ENCODE measurements at regions of chr5 and their contacts with region 1.

Region 1: DNA sequence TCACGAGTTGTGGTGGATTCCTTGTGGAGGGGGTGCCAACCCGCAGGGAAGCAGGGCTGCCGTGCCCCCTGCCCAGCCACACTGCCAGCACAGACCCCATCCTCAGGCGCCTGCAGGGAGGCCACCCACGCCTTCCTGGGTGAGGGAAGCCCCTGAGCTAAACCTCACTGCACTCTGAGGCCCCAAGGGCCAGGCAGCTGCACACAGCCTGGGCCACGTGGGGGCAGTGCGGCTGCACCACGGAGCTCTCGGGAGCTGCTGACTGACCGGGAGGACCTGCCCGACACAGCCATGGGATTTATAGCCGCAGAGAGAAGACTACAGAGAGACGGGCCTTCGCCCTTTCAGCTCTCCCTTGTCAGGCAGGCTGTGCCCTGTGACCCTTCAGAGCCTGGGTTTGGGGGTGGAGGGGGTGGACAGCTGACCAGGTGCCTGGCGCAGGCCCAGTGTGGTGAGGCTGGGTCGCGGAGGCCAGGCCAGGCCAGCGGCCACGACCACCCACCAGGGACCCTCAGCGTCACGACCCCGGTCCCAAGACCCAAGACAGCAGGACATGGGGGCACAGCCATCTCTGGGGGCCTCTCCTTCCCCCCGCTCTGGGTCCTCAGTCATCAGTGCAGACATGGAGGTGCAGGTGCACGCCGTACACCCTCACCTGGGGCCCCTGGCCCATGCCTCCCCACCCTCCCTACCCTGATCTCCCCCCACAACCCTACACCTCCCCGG is 4.3 kb upstream of the AHRR start:
- DNase-seq: no peak
- H3K4me3 ChIP-seq: no peak overlapping the region
- H3K27ac ChIP-seq: no peak overlapping the region
- H3K4me1 ChIP-seq: peaks cover 5% of the 10 kb centered on the region
- H3K27me3 ChIP-seq: no peaks in the 10 kb centered on the region
- CTCF ChIP-seq: no peak
- EP300 ChIP-seq: no peak
- POLR2A ChIP-seq: no peak

Region 2: DNA sequence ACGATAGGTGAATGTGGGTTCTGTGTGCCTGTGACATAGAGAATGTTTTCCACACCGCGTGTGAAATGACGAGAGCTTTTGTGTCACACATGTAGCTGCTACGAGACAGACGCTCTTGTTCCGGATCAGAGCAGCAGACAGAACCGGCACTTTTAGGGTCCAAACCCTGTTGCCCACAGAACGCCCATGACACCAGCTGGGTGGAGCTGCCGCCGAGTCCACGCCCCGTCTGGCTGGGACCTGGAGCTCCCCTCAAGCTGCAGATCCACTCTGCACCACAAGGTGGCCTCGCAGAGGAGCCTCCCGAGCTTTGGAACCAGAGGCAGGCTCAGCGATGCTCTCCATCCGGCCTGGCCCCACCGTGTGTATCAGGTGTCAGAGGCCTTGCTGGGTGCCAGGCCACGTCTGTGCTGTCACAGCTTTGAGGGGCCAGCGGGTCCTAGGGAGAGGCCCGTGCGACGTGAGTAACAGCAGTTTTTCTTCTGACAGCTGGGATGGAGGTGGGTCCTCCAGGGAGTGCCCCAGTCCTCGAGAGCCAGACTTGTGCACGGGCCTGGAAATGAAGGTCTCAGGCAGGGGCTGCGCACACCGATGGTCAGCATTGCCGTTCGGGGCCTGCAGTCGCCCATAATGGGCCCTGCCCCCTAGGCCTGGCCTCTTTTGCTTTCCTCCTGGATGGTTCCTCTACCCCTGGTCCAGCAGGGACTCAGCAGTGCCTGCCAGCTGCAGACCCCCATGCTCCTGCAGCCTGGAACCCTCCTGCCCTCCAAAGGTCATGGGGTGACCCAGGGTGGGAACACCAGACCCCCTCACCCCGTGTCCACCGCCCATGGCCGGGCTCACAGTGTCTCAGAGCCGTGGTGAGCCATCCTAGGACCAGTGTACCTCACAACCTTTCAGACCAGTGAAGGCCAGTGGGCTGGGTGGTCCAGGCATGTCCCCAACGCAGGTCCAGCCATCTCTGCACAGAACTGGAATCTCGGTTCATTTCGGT is 128.5 kb before region 1 on chr5:
- intact Hi-C with region 1: loop called in 1 of 4 experiments (anchors 5 kb)
- DNase-seq: peak; percentile 86 to 94 (median 92)
- H3K4me3 ChIP-seq: no peak overlapping the region
- H3K27ac ChIP-seq: no peak overlapping the region
- H3K4me1 ChIP-seq: peaks cover 7% of the 10 kb centered on the region
- H3K27me3 ChIP-seq: no peaks in the 10 kb centered on the region
- CTCF ChIP-seq: peak; percentile 88 to 96 (median 93)
- EP300 ChIP-seq: no peak
- POLR2A ChIP-seq: no peak

Region 3: GRCh38 chr5:442335-443238 is 125.3 kb after region 1 on chr5 and contains the start of gene EXOC3:
- intact Hi-C with region 1: loop called in 1 of 4 experiments (anchors 10 kb)
- DNase-seq: peak; percentile 65 to 84 (median 78)
- H3K4me3 ChIP-seq: peak within 1 kb of the TSS; percentile 63
- H3K27ac ChIP-seq: peak within 1 kb of the TSS in 1 of 2 donors; percentile 63
- H3K4me1 ChIP-seq: peaks cover 14% of the 10 kb centered on the region
- H3K27me3 ChIP-seq: no peaks in the 10 kb centered on the region
- CTCF ChIP-seq: no peak
- EP300 ChIP-seq: no peak
- POLR2A ChIP-seq: peak; percentile 43
- total RNA-seq, gene EXOC3: 25.5 to 67.4 (median 53.8) TPM

Measured in ovary (tissue), 10 donors.